ENCODE measurements at regions of chr4 and their contacts with region 1.

Region 1: GRCh38 chr4:37754410-37755185 is 68.4 kb upstream of the RELL1 start:
- DNase-seq: no peak
- H3K4me3 ChIP-seq: no peak overlapping the region
- H3K27ac ChIP-seq: no peak overlapping the region
- H3K4me1 ChIP-seq: peaks cover 14% of the 10 kb centered on the region
- CTCF ChIP-seq: no peak

Region 2: GRCh38 chr4:37765741-37766140 is 11.1 kb after region 1 on chr4:
- CTCF ChIA-PET with region 1: no interaction called
- POLR2A ChIA-PET with region 1: interaction called, 18 read pairs
- intact Hi-C with region 1: no loop called
- DNase-seq: no peak
- H3K4me3 ChIP-seq: no peak overlapping the region
- H3K27ac ChIP-seq: no peak overlapping the region
- H3K4me1 ChIP-seq: peaks cover 6% of the 10 kb centered on the region
- CTCF ChIP-seq: no peak

Measured in OCI-LY7 (cell line).